A549 (cell line): ENCODE measurements at regions of chr11 and their contacts with region 1.

Region 1: DNA sequence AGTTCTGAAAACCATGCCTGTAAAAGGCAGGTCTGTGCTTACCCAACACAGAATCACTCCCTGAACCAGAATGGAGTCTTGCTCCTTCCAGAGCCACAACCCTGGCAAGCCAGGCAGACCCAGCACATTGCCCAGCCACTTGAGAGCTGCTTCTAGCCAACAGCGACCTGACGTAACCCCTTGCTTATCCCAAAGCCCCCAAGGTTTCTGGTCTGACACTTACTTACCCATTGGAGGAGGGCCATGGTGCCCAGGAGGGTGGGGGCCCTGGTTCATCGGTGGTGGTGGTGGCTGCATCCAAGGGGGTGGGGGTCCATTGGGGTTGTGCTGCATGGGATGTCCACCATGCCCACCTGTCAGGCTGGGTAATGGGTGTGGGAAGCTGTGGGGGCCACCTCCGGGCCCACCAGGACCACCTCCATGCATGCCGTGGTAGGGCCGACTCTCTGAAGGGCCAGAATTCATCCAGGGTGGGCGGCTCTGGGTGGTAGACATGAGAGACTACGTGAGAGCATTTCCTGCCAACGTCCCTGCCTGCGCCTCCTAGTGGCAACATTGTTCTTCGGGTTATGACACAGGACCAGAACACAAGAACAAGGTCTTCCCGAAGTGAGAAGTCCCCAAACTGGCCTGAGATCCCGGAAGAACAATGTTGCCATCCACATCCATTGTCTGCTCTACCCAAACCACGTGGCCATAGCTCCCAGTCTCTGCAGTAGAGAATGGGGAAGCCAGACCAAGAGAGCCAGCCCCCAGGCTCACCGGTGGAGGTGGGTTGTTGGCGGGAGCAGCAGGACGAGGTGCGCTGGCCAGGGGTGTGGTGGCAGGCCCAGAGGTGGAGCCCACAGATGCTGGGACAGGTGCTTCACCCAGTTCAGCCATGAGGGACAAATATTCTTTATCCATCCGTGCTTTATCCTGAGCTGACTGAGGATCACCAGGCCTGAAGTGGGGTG is 7.8 kb upstream of the PYGM start:
- DNase-seq: peak in 1 of 2 experiments; percentile 82
- ATAC-seq: peak; percentile 66 to 79; a peak in 5 of 6 replicates
- H3K4me3 ChIP-seq: no peak overlapping the region
- H3K27ac ChIP-seq: no peak overlapping the region
- H3K4me1 ChIP-seq: peaks cover 10% of the 10 kb centered on the region; the same call in 2 of the 3 replicates
- CTCF ChIP-seq: peak; percentile 74
- EP300 ChIP-seq: no peak
- POLR2A ChIP-seq: no peak
- RAD21 ChIP-seq: 0 out of 5 replicates have a peak, but pooled peaks of 1 of the 2 experiments have one; percentile 14

Region 2: DNA sequence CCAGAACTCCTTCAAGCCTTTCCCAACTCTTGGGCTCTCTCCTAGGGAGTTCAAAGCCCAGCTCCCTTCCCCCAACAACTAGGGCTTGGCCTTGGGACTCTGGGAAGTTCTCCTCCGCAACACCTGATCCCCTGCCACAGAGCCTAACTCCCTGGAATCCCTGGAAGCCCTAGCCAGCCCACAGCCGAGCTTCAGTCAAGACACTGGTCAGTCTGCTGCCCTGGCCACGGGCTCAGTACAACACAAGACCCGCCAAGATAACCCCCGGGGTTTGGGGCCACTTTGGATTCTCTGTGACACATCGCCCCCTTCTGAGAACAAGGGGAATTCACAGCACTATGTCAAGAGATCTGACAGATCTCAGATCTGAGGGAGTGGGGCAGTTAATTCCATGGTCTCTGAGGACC is 118.3 kb before region 1 on chr11:
- CTCF ChIA-PET with region 1: no interaction called
- POLR2A ChIA-PET with region 1: no interaction called
- DNase-seq: peak; percentile 39 to 48
- ATAC-seq: peak in 1 of 2 experiments; percentile 12; a peak in 3 of 6 replicates
- H3K4me3 ChIP-seq: no peak overlapping the region
- H3K27ac ChIP-seq: no peak overlapping the region
- H3K4me1 ChIP-seq: no peaks in the 10 kb centered on the region
- CTCF ChIP-seq: peak; percentile 49
- EP300 ChIP-seq: no peak
- POLR2A ChIP-seq: no peak
- RAD21 ChIP-seq: peak; percentile 70 to 72

Region 3: GRCh38 chr11:64750361-64751054 is 17.1 kb before region 1 on chr11:
- CTCF ChIA-PET with region 1: interaction called, 104 read pairs
- POLR2A ChIA-PET with region 1: no interaction called
- DNase-seq: no peak
- ATAC-seq: no peak
- H3K4me3 ChIP-seq: no peak overlapping the region
- H3K27ac ChIP-seq: no peak overlapping the region
- H3K4me1 ChIP-seq: 0 out of 3 replicates have a peak, but pooled peaks cover 3% of the 10 kb centered on the region
- CTCF ChIP-seq: no peak
- EP300 ChIP-seq: no peak
- POLR2A ChIP-seq: no peak
- RAD21 ChIP-seq: no peak

Region 4: GRCh38 chr11:64778508-64779346 is 11.1 kb after region 1 on chr11 and contains the start of gene SF1:
- CTCF ChIA-PET with region 1: interaction called, 73 read pairs
- POLR2A ChIA-PET with region 1: interaction called, 32 read pairs
- DNase-seq: peak; percentile 99 to 100
- ATAC-seq: peak; percentile 91 to 96
- H3K4me3 ChIP-seq: peak within 1 kb of the TSS; percentile 90
- H3K27ac ChIP-seq: peak within 1 kb of the TSS; percentile 98 to 99
- H3K4me1 ChIP-seq: peaks cover 32% of the 10 kb centered on the region
- CTCF ChIP-seq: no peak
- EP300 ChIP-seq: no peak
- POLR2A ChIP-seq: peak; percentile 61
- RAD21 ChIP-seq: no peak
- polyA plus RNA-seq, gene SF1: 88.8 and 104 TPM in 2 replicates

Region 5: GRCh38 chr11:65194564-65194963 is 426.9 kb after region 1 on chr11:
- CTCF ChIA-PET with region 1: no interaction called
- POLR2A ChIA-PET with region 1: no interaction called
- DNase-seq: no peak
- ATAC-seq: no peak
- H3K4me3 ChIP-seq: no peak overlapping the region
- H3K27ac ChIP-seq: no peak overlapping the region
- H3K4me1 ChIP-seq: no peaks in the 10 kb centered on the region
- CTCF ChIP-seq: no peak
- EP300 ChIP-seq: no peak
- POLR2A ChIP-seq: no peak
- RAD21 ChIP-seq: no peak